HEK293 (cell line): ENCODE measurements at regions of chr7 and their contacts with region 1.

Region 1: GRCh38 chr7:45092100-45092928 is 3.5 kb upstream of the NACAD start:
- H3K4me3 ChIP-seq: no peak overlapping the region
- H3K27ac ChIP-seq: no peak overlapping the region
- H3K4me1 ChIP-seq: peaks cover 8% of the 10 kb centered on the region
- CTCF ChIP-seq: no peak

Region 2: DNA sequence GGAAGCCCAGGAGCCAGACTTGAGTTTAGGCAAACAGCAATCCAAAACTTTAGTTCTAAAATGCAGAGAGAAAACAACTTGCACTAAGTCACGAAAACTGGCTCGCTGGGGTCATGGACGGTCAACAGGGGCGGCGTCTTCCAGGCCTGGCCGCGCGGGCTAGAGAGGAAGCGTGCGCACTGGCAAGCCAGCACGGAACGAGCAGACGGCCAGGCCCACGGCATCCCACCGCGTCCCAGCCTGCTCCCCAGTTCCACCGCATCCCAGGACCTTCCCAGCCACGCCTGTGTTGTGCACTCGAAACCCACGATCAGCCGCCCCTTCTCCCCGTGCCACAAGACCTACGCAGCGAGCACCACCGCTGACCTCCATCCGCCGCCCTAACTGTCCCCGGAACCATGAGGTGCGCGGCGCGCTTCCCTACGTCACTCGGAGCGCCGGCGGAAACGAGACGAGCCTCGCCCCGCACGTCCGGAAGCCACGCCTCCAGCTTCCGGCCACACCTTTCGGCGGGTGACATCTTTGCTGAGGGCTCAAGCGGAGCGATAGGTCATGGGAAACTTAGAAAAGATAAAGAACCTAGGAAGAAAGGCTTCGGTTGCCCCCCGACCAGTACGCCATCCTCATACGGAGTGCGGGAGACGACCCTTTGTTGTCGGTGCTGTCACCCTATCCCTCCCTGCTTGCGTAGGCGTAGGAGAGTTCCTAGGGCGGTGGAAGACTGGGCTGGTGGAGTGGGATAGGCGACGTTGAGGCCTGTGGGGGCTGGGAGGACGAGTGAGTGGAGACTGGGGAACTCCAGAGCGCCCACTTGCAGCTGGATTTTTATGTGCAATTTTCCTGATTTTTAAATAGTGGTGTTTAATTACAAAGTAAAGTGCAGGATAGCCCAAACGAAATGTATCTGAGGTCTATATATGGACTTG is 19.2 kb after region 1 on chr7 and contains the start of gene TBRG4:
- CTCF ChIA-PET with region 1: no interaction called
- POLR2A ChIA-PET with region 1: interaction called, 13 read pairs
- H3K4me3 ChIP-seq: peak within 1 kb of the TSS; percentile 65
- H3K27ac ChIP-seq: peak within 1 kb of the TSS; percentile 87
- H3K4me1 ChIP-seq: no peaks in the 10 kb centered on the region
- CTCF ChIP-seq: peak; percentile 30